BJ (cell line): ENCODE measurements at regions of chr13 and their contacts with region 1.

Region 1: DNA sequence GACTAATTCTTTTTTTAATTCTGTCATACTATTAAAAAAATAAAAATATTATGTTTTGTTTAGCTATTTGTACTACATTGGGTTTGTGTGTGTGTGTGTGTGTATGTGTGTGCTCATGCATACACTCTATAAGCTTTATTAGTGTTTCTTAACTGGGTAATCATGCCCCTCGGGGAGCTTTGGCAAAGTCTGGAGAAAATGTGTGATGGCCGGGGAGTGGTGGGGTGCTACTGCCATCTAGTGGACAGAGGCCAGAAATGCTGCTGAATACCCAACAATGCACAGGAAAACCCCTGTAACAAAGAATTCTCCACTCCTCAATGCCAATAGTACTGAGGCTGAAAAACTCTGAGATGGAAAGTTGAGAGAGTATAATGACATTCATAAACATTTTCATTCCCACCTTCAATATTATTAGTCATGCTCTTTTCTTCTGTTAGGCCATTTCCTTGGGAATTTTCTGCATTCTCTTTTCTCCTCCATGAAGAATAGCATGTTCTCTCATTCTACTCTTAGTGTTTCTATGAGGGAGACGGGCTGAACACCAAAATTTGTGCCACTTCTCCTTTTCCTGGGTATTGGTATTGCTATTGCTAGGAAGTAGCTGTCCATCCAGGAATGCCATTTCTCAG is 157.3 kb downstream of the DNAJC3 start:
- DNase-seq: peak; percentile 4
- H3K4me3 ChIP-seq: no peak overlapping the region
- H3K27me3 ChIP-seq: no peaks in the 10 kb centered on the region
- CTCF ChIP-seq: peak; percentile 88

Region 2: DNA sequence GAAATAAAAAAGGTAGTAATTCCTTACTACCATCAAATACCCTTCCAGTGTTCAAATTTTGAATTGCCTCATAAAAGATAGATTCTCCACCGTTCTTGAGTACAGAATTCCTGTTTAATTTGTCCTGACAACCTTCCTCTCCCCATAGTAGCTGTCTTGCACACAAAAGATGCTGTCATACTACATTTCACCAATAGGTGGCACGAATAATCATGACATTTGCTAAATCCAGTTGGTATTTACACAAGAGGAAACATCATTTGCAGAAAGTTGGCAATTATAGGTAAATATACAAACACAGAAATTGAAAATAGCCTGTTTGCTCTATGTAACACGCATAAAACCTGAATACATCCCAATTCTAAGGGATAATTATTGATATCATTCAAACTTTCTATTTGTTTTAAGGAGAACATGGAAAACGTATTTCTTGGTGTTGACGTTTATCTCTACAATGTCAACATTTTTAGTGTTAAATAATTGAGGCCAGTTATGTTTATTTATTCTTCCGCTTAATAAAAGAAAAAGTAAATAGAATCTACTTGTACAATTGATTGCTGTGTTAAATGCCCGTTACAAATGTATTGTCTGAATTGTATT is 340.1 kb before region 1 on chr13:
- CTCF ChIA-PET with region 1: interaction called, 10 read pairs
- POLR2A ChIA-PET with region 1: no interaction called
- DNase-seq: peak; percentile 9
- H3K4me3 ChIP-seq: no peak overlapping the region
- H3K27me3 ChIP-seq: no peaks in the 10 kb centered on the region
- CTCF ChIP-seq: peak; percentile 69

Region 3: DNA sequence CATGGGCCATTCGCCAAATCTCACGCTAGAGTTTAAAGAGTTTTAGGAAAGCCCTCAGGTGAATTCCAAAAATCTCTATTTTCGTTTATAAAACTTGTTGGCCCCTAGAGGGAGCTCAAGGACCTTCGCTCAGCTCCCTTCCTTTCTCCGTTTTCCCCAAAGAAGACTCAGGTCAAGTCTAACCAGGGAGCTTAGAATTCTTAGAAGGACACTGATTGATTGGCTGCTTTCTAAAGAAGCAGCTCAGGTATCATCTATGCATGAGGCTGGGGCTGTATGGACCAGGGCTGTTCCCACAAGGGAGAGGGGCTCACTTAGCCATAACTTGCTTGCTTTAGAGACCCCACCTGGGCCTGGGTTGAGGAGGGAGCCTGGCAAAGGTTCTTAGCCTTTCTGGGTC is 210.2 kb before region 1 on chr13:
- CTCF ChIA-PET with region 1: interaction called, 103 read pairs
- POLR2A ChIA-PET with region 1: no interaction called
- DNase-seq: no peak
- H3K4me3 ChIP-seq: no peak overlapping the region
- H3K27me3 ChIP-seq: no peaks in the 10 kb centered on the region
- CTCF ChIP-seq: peak; percentile 75

Region 4: DNA sequence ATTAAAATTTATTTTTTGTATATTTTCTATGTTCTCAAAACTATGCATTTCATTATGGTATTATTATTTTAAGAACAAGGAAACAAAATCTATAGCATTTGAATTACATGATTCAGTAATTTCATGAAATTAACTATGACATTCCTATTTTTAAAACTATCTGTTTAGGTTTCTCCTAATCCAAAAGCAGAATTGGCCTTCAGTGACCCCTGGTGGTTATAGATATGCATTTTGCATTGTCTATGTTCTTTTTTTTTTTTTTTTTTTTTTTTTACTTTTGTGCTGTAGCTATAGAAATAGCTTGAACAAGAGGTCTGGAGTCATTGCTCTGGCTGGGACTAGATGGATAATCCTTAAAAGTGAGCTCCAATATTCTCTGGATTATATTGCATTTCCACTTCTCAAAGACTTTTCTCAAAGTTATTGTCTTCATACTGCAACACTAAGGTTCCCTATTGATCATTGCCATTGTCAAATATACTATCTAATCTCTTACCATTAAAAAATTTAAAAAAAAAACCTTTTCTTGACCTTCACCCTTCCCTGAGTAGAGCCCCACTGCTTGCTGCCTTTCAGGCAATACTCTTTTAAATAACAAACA is 173.2 kb before region 1 on chr13:
- CTCF ChIA-PET with region 1: interaction called, 18 read pairs
- POLR2A ChIA-PET with region 1: no interaction called
- DNase-seq: no peak
- H3K4me3 ChIP-seq: no peak overlapping the region
- H3K27me3 ChIP-seq: no peaks in the 10 kb centered on the region; the same call in none of the 2 replicates
- CTCF ChIP-seq: peak; percentile 61

Region 5: GRCh38 chr13:95858286-95859075 is 24.2 kb after region 1 on chr13:
- CTCF ChIA-PET with region 1: interaction called, 13 read pairs
- POLR2A ChIA-PET with region 1: no interaction called
- DNase-seq: no peak
- H3K4me3 ChIP-seq: no peak overlapping the region
- H3K27me3 ChIP-seq: no peaks in the 10 kb centered on the region
- CTCF ChIP-seq: no peak

Region 6: GRCh38 chr13:95914991-95915501 is 80.8 kb after region 1 on chr13:
- CTCF ChIA-PET with region 1: no interaction called
- POLR2A ChIA-PET with region 1: no interaction called
- DNase-seq: no peak
- H3K4me3 ChIP-seq: no peak overlapping the region
- H3K27me3 ChIP-seq: no peaks in the 10 kb centered on the region
- CTCF ChIP-seq: no peak